ENCODE measurements at regions of chr12 and their contacts with region 1.

Region 1: GRCh38 chr12:65556681-65557437 is 267.4 kb upstream of the HMGA2 start:
- DNase-seq: peak; percentile 53
- H3K4me3 ChIP-seq: no peak overlapping the region
- H3K27ac ChIP-seq: no peak overlapping the region
- H3K4me1 ChIP-seq: no peaks in the 10 kb centered on the region
- CTCF ChIP-seq: peak; percentile 83

Region 2: DNA sequence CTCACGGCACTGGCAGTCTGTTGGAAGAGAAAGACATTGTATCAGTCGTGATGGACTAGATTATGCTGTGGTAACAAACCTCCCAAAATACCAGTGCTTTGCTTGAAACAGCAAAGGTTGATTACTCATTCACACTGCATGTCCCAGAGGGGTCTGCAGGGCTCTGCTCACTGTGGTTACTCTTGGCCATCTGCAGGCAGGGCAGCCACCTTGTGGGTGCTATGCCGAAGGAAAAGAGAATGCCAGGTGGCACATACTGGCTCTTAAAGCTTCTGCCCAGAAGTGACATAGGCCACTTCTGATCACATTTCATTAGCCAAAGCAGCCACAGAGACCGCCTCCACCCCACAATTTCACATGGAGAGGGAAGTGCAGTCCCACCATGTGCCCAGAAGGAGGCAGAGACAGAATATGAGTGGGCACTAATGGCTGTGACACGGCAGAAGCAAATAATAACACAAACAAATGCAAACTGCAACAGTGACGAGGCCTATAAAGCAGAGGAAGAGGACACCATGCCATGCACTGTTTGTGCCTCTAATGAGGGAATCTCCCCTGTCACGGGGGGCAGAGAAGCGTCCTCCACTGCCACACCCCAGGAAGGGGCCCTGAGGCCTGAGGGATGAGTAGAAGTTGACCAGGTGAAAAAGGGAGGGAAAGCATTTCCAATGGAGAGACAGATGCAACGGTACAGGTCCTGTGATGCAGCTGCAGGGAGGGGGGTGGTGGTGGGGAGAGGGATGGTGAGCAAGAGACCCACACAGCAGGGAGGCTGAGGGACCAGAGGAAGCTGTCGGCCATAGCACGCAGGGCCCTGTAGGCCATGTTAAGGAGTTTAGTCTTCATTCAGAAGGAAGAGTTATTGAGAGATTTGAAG is 1283.1 kb before region 1 on chr12:
- CTCF ChIA-PET with region 1: no interaction called
- POLR2A ChIA-PET with region 1: no interaction called
- intact Hi-C with region 1: no loop called
- DNase-seq: no peak
- H3K4me3 ChIP-seq: no peak overlapping the region
- H3K27ac ChIP-seq: no peak overlapping the region
- H3K4me1 ChIP-seq: no peaks in the 10 kb centered on the region
- CTCF ChIP-seq: peak; percentile 61

Region 3: DNA sequence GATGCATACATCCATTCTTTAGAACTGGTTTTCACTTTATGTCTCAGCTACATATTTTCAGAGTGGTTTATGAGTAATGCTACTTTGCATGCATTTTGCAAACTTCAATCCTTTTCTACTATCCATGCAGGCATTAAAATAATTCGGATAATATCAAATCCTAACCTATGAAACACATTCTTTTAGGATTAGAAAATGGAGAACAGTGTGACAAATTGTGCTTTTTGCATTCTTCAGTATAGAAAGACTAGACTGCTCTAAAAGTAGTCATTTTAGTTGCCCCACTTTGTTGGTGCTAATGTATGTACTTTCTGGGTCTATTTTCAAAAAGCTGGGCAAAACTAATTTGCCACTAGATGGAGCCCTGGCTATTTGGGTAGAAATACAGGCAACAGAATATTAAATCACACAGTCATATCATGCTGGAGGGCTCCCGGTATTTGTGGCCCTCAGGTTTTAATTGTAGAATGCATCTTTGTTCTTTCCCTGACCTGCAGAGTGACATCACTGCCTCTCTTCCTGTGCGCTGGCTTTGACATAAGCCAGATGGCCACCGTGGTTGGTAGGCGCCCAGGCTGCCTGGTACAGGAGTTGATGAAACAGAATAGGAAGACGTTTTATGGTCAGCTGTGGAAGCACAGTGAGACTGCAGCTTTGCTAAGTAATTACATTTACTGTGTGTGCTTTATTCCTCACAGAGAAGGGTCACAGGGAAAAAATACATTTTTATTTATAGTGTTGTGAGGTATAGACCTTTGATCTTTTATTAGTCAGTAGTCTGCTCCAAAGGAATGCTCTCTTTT is 250.3 kb before region 1 on chr12:
- CTCF ChIA-PET with region 1: no interaction called
- POLR2A ChIA-PET with region 1: no interaction called
- intact Hi-C with region 1: no loop called
- DNase-seq: peak; percentile 27
- H3K4me3 ChIP-seq: no peak overlapping the region
- H3K27ac ChIP-seq: no peak overlapping the region
- H3K4me1 ChIP-seq: no peaks in the 10 kb centered on the region
- CTCF ChIP-seq: peak; percentile 81

Region 4: DNA sequence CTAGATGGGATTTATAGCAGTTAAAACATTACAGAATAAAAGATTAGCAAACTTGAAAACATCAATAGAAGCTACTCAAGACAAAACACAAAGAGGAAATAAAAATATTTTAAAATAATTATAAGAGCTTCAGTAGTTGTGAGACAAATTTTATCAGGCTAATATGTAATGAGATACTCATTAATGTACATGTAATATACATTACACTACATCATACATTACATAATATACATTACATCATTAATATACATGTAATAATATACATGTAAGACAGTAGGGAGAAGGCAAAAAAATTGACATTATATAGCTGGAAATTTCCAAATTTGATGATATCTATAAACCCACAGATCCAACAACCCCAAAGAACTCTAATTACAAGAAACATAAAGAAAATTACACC is 18.0 kb after region 1 on chr12:
- CTCF ChIA-PET with region 1: no interaction called
- POLR2A ChIA-PET with region 1: no interaction called
- intact Hi-C with region 1: no loop called
- DNase-seq: no peak
- H3K4me3 ChIP-seq: no peak overlapping the region
- H3K27ac ChIP-seq: no peak overlapping the region
- H3K4me1 ChIP-seq: no peaks in the 10 kb centered on the region
- CTCF ChIP-seq: no peak

Region 5: GRCh38 chr12:65597527-65597926 is 40.7 kb after region 1 on chr12:
- CTCF ChIA-PET with region 1: no interaction called
- POLR2A ChIA-PET with region 1: no interaction called
- intact Hi-C with region 1: no loop called
- DNase-seq: no peak
- H3K4me3 ChIP-seq: no peak overlapping the region
- H3K27ac ChIP-seq: no peak overlapping the region
- H3K4me1 ChIP-seq: no peaks in the 10 kb centered on the region
- CTCF ChIP-seq: no peak

Region 6: DNA sequence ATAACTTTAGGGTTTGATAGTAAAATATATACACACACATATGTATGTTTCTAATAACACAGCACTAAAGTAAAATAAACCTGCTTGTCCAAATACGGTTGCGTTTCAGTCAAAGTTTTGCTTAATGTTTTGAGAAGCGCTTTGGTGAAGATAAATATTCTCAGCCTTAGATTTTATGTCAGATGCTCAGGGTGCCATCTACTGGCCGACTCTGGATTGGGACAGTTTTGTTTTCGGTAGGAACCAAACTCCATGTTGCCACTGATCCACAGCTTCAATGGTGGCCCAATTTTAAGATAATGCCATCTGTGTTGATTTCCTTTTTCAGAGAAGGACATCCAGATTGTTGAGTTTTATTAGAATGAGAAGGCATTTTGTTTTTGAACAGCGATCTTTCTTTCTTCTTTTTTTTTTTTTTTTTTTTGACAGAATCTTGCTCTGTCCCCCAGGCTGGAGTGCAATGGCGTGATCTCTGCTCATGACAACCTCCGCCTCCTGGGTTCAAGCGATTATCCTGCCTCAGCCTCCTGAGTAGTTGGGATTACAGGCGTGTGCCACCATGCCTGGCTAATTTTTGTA is 530.6 kb after region 1 on chr12:
- CTCF ChIA-PET with region 1: no interaction called
- POLR2A ChIA-PET with region 1: no interaction called
- intact Hi-C with region 1: loop called (anchors 5 kb)
- DNase-seq: peak; percentile 48
- H3K4me3 ChIP-seq: no peak overlapping the region
- H3K27ac ChIP-seq: no peak overlapping the region
- H3K4me1 ChIP-seq: no peaks in the 10 kb centered on the region
- CTCF ChIP-seq: peak; percentile 89

Measured in OCI-LY7 (cell line).